Activated CD4-positive, alpha-beta T cell treated with anti-CD3 and anti-CD28 coated beads, Interleukin-2, amount 10 ng/mL, durations not matched to agents 24 days and 14 days (primary cell): ENCODE measurements at regions of chr10 and their contacts with region 1.

Region 1: DNA sequence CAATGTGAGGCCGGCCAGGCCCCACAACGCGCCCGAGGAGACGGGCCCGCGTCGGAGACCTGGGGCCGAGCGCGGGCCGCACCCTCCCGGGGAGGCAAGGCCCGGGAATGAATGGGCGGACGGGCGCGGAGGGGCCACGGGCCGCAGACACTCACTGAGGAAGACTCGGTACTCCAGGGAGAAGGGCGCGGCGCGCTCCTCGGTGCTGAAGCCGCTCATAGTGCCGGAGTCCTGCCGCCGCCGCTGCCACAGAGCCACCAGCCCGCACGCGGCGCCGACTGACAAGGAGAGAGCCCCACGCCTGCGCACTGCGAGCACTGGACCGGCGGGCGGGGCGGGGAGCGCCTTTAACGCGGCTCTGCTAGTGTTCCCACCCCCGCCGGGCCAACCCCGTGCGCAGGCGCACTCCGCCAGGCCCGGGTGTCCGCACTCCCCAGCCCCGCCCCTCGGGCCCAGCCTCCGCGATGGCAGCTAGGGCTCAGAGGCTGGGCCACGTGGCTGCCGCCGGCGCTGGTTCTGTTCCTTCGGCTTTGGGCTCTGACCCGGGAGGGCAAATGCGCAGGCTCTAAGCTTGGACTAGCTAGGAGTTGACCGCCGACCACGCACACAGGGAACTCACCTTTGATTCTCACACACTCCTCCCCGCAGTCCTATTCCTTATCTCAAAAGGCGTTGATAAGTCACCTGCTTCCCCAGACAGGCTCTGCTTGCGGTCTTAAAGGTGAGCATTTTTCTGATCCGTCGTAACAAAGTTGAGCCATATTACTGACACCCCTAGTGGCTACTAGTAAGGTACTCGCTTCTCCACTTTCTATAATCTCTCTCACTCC is at the start of gene PPA1:
- DNase-seq: peak; percentile 100
- H3K4me3 Mint-ChIP-seq: peak within 1 kb of the TSS; percentile 84
- H3K27ac Mint-ChIP-seq: peak within 1 kb of the TSS; percentile 96
- H3K4me1 Mint-ChIP-seq: peaks cover 29% of the 10 kb centered on the region
- H3K27me3 Mint-ChIP-seq: no peaks in the 10 kb centered on the region
- total RNA-seq, gene PPA1: 413 and 424 TPM in 2 replicates

Region 2: GRCh38 chr10:70162892-70163201 is 70.5 kb before region 1 on chr10:
- intact Hi-C with region 1: loop called (anchors 2 kb)
- DNase-seq: peak; percentile 89
- H3K4me3 Mint-ChIP-seq: peak overlapping the region; percentile 50
- H3K27ac Mint-ChIP-seq: peak overlapping the region; percentile 88
- H3K4me1 Mint-ChIP-seq: peaks cover 57% of the 10 kb centered on the region
- H3K27me3 Mint-ChIP-seq: no peaks in the 10 kb centered on the region

Region 3: DNA sequence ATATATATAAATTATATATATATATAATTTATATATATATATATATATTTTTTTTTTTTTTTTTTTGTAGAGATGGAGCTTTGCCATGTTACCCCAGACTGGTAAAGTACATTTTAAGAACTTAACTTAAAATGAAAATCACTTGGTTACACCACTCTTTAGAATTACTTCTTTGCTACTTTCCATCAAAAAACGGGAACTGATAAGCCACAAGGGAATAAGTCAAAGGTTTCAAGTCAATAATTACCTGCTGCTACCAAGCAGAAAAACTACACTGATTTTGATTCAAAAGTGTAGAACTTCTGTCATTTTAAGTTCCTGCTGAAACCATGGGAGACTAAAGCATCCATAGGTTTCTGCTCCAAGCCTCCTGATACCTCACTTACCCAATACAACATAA is 12.3 kb before region 1 on chr10:
- intact Hi-C with region 1: loop called (anchors 1 kb)
- DNase-seq: no peak
- H3K4me3 Mint-ChIP-seq: peak overlapping the region; percentile 69
- H3K27ac Mint-ChIP-seq: no peak overlapping the region
- H3K4me1 Mint-ChIP-seq: peaks cover 23% of the 10 kb centered on the region
- H3K27me3 Mint-ChIP-seq: no peaks in the 10 kb centered on the region

Region 4: DNA sequence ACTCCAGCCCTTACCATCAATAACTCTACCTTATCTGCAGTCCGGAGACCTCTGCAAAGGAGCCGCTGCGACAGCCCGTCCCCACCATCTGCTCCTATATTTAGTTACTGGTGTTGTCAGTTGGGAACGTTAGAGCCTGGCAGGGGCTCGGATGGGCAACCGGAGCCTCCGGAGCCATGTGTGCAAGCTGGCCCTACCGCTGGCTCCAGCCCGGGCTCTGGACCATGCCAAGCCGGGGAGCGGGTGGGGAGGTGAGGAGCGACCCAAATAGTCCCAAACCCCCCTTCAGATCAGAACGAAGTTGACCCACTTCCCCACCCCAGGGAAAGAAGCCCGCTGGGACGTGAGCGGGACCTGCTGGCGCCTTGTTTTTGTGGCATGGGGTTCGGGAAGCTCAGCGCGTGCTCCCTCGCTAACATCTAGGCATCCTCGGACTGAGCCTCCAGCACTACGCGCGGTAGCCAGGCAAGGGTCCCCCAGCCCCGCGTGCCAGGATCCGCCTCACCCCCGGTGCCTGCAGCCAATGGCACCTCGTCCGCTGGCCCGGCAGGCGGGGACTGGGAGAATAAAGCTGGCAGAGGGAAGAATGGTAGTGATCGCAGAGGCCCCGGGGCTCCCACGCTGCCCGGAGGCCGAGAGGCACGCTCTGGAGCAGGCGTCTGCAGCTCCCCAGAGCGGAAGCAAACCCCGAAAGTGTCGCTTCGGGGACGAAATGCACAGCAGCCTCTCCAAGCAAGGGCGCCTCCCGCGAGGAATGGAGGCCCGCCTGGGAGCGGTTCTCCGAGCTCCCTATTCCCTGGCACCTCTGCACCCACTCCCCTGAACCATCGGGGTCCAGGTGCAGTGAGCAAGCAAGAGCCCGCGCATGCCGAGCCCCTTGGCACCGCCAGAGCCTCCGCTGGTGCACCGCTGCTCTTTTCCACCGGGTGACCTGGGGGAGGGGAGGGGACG is 148.4 kb after region 1 on chr10:
- intact Hi-C with region 1: loop called (anchors 1 kb)
- DNase-seq: peak; percentile 85
- H3K4me3 Mint-ChIP-seq: peak overlapping the region; percentile 91
- H3K27ac Mint-ChIP-seq: peak overlapping the region; percentile 79
- H3K4me1 Mint-ChIP-seq: peaks cover 11% of the 10 kb centered on the region
- H3K27me3 Mint-ChIP-seq: peaks cover 2% of the 10 kb centered on the region